GM12878 (cell line): ENCODE measurements at regions of chr12 and their contacts with region 1.

Region 1: GRCh38 chr12:108562348-108563135 is at the start of gene ISCU:
- DNase-seq: peak; percentile 90
- ATAC-seq: peak; percentile 66
- H3K4me3 ChIP-seq: peak within 1 kb of the TSS; percentile 89
- H3K27ac ChIP-seq: peak within 1 kb of the TSS; percentile 100
- H3K4me1 ChIP-seq: peaks cover 42% of the 10 kb centered on the region
- H3K27me3 ChIP-seq: no peaks in the 10 kb centered on the region
- CTCF ChIP-seq: no peak
- EP300 ChIP-seq: no peak
- POLR2A ChIP-seq: peak; percentile 94
- RAD21 ChIP-seq: no peak
- polyA plus RNA-seq, gene ISCU: 32.8 to 66.1 TPM

Region 2: DNA sequence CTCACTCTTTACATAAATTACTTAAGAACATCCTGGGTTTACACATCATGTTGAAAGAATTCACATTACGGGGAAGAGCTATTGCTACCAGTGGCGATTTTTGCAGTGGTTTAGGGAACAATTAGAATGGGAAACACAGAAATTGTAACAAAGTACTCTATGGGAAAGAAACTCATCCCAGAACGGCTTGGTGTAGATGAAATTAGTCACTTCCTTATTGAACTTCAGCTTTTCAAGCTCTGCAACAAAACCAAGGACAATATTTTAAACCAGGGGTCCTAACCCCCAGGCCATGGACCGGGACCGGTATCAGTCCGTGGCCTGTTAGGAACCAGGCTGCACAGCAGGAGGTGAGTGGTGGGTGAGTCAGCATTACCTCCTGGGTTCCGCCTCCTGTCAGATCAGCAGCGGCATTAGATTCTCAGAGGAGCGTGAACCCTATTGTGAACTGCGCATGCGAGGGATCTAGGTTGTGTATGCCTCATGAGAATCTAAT is 79.8 kb before region 1 on chr12:
- CTCF ChIA-PET with region 1: no interaction called
- POLR2A ChIA-PET with region 1: no interaction called
- RAD21 ChIA-PET with region 1: no interaction called
- SMC1A ChIA-PET with region 1: no interaction called
- in situ Hi-C with region 1: no loop called
- intact Hi-C with region 1: no loop called
- DNase-seq: no peak
- ATAC-seq: no peak
- H3K4me3 ChIP-seq: no peak overlapping the region
- H3K27ac ChIP-seq: no peak overlapping the region
- H3K4me1 ChIP-seq: no peaks in the 10 kb centered on the region
- H3K27me3 ChIP-seq: no peaks in the 10 kb centered on the region
- CTCF ChIP-seq: no peak
- EP300 ChIP-seq: no peak
- POLR2A ChIP-seq: no peak
- RAD21 ChIP-seq: no peak

Region 3: DNA sequence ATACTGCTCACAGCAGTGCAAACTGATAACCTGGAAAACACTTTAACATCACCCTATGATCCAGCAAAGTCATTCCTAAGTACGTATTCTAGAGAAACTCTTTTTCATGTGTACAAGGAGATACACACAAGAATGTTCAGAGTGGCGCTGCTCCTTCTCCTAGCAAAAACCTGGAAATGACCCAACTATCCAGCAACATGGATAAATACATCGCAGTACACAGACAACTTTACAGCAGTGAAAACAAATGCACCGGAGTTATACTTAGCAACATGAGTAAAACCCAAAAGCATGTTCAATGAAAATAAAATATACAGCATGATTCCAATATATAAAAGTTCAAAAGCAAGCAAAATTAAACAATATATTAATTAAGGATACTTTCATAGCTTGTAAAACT is 20.2 kb before region 1 on chr12:
- CTCF ChIA-PET with region 1: interaction called, 12 read pairs
- POLR2A ChIA-PET with region 1: interaction called, 13 read pairs
- RAD21 ChIA-PET with region 1: interaction called, 13 read pairs
- SMC1A ChIA-PET with region 1: interaction called, 10 read pairs
- in situ Hi-C with region 1: no loop called
- intact Hi-C with region 1: loop called (anchors 2 kb)
- DNase-seq: no peak
- ATAC-seq: no peak
- H3K4me3 ChIP-seq: no peak overlapping the region
- H3K27ac ChIP-seq: peak overlapping the region; percentile 88; the same call in 1 of the 2 replicates
- H3K4me1 ChIP-seq: peaks cover 23% of the 10 kb centered on the region
- H3K27me3 ChIP-seq: no peaks in the 10 kb centered on the region
- CTCF ChIP-seq: no peak
- EP300 ChIP-seq: no peak
- POLR2A ChIP-seq: no peak
- RAD21 ChIP-seq: no peak

Region 4: DNA sequence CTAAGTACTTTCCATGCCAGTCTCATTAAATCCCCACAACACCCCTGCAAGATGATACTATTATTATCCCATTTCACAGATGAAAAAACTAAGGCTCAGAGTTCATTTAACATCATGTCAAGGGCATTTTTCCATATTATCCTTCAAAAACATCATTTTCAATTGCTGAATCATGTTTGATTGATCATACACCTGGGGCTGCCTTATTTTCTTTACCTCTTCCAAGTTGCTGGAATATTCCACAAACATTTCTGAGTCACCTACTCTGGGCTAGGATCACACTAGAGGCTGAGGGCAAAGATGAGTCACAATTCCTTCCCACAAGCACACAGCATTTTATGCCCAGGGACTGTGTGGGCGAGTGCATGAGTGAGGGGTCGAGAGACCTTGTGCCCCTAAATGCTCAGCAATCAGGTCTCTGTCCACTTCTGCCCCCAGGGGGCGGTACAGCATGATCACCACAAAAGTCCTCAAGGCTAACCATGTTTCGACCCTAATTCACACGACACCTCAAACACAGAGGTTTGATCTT is 49.4 kb after region 1 on chr12:
- CTCF ChIA-PET with region 1: interaction called, 866 read pairs
- POLR2A ChIA-PET with region 1: interaction called, 211 read pairs
- RAD21 ChIA-PET with region 1: interaction called, 633 read pairs
- SMC1A ChIA-PET with region 1: interaction called, 718 read pairs
- in situ Hi-C with region 1: loop called (anchors 5 kb)
- intact Hi-C with region 1: no loop called
- DNase-seq: no peak
- ATAC-seq: peak; percentile 5; the same call in 1 of the 3 replicates
- H3K4me3 ChIP-seq: no peak overlapping the region
- H3K27ac ChIP-seq: no peak overlapping the region
- H3K4me1 ChIP-seq: peaks cover 51% of the 10 kb centered on the region
- H3K27me3 ChIP-seq: no peaks in the 10 kb centered on the region
- CTCF ChIP-seq: peak; percentile 15 to 57 (median 18); a peak in 4 of 6 replicates
- EP300 ChIP-seq: no peak
- POLR2A ChIP-seq: no peak
- RAD21 ChIP-seq: peak; percentile 35; the same call in 1 of the 2 replicates

Region 5: DNA sequence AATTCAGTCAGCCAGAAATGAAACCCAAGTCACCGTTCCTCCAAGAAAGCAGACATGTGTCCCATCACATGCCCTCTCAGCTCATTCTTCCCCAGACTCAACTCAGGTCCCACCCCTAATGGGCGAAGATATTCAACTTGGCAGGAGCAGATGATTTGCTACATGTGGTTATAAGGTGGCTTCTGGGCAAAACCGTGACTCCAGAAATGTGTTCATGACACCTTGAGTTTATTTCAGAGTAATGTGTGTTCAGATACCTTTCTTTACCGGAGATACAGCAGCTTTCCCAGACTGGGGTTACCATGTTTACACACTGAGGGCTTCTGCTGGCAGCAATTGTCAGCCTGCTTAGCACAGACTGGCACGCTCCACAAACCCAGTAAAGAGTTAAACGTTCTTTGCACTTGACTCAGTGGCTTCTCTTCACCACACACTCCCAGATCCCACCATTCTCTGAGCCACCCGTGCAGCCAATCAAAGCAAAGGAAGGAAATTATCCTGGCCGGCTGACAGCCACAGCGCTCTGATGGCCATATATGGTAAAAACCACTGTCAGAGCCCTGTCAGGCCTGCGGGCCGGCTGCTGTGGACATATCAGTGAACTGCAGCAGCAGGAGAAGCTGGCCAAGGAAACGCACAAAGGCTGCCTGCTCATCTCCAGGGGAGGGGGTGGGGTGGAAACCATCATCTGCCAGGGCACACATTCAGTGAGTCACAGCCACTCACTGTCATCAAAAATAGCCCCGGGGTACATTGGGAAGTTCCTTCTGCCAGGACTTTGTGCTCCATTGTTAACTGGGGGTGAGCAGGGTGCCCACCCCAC is 128.8 kb after region 1 on chr12:
- CTCF ChIA-PET with region 1: interaction called, 3 read pairs
- POLR2A ChIA-PET with region 1: interaction called, 4 read pairs
- RAD21 ChIA-PET with region 1: interaction called, 12 read pairs
- SMC1A ChIA-PET with region 1: interaction called, 3 read pairs
- in situ Hi-C with region 1: no loop called
- intact Hi-C with region 1: no loop called
- DNase-seq: peak; percentile 63
- ATAC-seq: peak; percentile 90
- H3K4me3 ChIP-seq: peak overlapping the region; percentile 62; the same call in 1 of the 2 replicates
- H3K27ac ChIP-seq: peak overlapping the region; percentile 97
- H3K4me1 ChIP-seq: peaks cover 66% of the 10 kb centered on the region
- H3K27me3 ChIP-seq: no peaks in the 10 kb centered on the region
- CTCF ChIP-seq: peak in 2 of 3 experiments; percentile 24 to 37; a peak in 2 of 6 replicates
- EP300 ChIP-seq: 0 out of 4 replicates have a peak, but pooled peaks of 1 of the 2 experiments have one; percentile 29
- POLR2A ChIP-seq: peak; percentile 27; the same call in 1 of the 2 replicates
- RAD21 ChIP-seq: no peak

Region 6: GRCh38 chr12:108803428-108804105 is 241.0 kb after region 1 on chr12:
- CTCF ChIA-PET with region 1: interaction called, 137 read pairs
- POLR2A ChIA-PET with region 1: no interaction called
- RAD21 ChIA-PET with region 1: interaction called, 44 read pairs
- SMC1A ChIA-PET with region 1: interaction called, 115 read pairs
- in situ Hi-C with region 1: loop called (anchors 5 kb)
- intact Hi-C with region 1: loop called (anchors 1 kb)
- DNase-seq: peak; percentile 57
- ATAC-seq: peak; percentile 90
- H3K4me3 ChIP-seq: no peak overlapping the region
- H3K27ac ChIP-seq: peak overlapping the region; percentile 41
- H3K4me1 ChIP-seq: peaks cover 9% of the 10 kb centered on the region; the same call in 1 of the 2 replicates
- H3K27me3 ChIP-seq: no peaks in the 10 kb centered on the region
- CTCF ChIP-seq: peak; percentile 90 to 94 (median 91)
- EP300 ChIP-seq: no peak
- POLR2A ChIP-seq: no peak
- RAD21 ChIP-seq: peak; percentile 98

Region 7: GRCh38 chr12:108921946-108922345 is 359.4 kb after region 1 on chr12:
- CTCF ChIA-PET with region 1: no interaction called
- POLR2A ChIA-PET with region 1: no interaction called
- RAD21 ChIA-PET with region 1: no interaction called
- SMC1A ChIA-PET with region 1: no interaction called
- in situ Hi-C with region 1: no loop called
- intact Hi-C with region 1: no loop called
- DNase-seq: no peak
- ATAC-seq: no peak
- H3K4me3 ChIP-seq: no peak overlapping the region
- H3K27ac ChIP-seq: no peak overlapping the region
- H3K4me1 ChIP-seq: no peaks in the 10 kb centered on the region
- H3K27me3 ChIP-seq: no peaks in the 10 kb centered on the region
- CTCF ChIP-seq: no peak
- EP300 ChIP-seq: no peak
- POLR2A ChIP-seq: no peak
- RAD21 ChIP-seq: no peak

Region 8: GRCh38 chr12:108950991-108951739 is 388.6 kb after region 1 on chr12:
- CTCF ChIA-PET with region 1: interaction called, 14 read pairs
- POLR2A ChIA-PET with region 1: no interaction called
- RAD21 ChIA-PET with region 1: interaction called, 3 read pairs
- SMC1A ChIA-PET with region 1: interaction called, 11 read pairs
- in situ Hi-C with region 1: loop called (anchors 5 kb)
- intact Hi-C with region 1: loop called (anchors 5 kb)
- DNase-seq: peak; percentile 38
- ATAC-seq: peak; percentile 97
- H3K4me3 ChIP-seq: no peak overlapping the region
- H3K27ac ChIP-seq: no peak overlapping the region
- H3K4me1 ChIP-seq: peaks cover 3% of the 10 kb centered on the region; the same call in 1 of the 2 replicates
- H3K27me3 ChIP-seq: no peaks in the 10 kb centered on the region; a peak in 1 of 4 replicates
- CTCF ChIP-seq: peak; percentile 85 to 87 (median 86)
- EP300 ChIP-seq: no peak
- POLR2A ChIP-seq: no peak
- RAD21 ChIP-seq: peak; percentile 92